Breast epithelium (tissue), 4 donors: ENCODE measurements at regions of chr9 and their contacts with region 1.

Region 1: GRCh38 chr9:98962181-98962560 is 18.5 kb downstream of the COL15A1 start:
- DNase-seq: no peak
- H3K4me3 ChIP-seq: no peak overlapping the region
- H3K27ac ChIP-seq: peak overlapping the region; percentile 12 to 33
- H3K4me1 ChIP-seq: no peaks in the 10 kb centered on the region
- H3K27me3 ChIP-seq: no peaks in the 10 kb centered on the region
- CTCF ChIP-seq: no peak
- POLR2A ChIP-seq: no peak

Region 2: DNA sequence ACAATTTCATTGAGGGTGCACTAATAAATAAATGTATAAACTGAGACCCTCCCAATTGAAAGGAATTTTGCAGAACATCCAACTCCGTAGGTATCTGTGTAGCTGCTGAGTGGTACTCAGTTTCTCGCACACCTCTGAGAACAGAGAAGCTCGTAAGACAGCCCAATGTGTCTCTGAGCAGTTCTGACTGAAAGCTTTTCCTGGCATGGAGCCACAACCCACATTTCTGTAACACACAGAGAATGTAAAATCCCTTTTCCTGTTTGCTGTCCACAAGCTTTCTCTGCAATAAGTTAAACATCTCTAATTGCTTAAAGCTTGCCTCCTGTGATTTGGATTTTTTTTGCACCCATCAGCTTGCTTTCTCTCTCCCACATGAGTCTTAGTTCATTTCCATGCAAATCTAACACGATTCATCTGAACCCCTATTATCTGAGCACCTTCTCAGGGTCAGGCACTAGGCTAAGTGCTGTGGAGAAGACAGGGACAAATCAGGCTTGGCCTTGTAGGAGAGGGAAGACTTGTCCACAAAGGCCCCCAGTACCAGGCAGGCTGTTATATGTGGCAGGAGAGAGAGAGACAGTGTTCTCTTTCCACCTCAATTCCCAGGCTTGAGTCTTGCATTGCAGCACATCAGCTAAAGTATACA is 62.6 kb before region 1 on chr9:
- intact Hi-C with region 1: loop called (anchors 10 kb)
- DNase-seq: no peak
- H3K4me3 ChIP-seq: no peak overlapping the region
- H3K27ac ChIP-seq: no peak overlapping the region
- H3K4me1 ChIP-seq: no peaks in the 10 kb centered on the region
- H3K27me3 ChIP-seq: no peaks in the 10 kb centered on the region
- CTCF ChIP-seq: no peak
- POLR2A ChIP-seq: no peak

Region 3: DNA sequence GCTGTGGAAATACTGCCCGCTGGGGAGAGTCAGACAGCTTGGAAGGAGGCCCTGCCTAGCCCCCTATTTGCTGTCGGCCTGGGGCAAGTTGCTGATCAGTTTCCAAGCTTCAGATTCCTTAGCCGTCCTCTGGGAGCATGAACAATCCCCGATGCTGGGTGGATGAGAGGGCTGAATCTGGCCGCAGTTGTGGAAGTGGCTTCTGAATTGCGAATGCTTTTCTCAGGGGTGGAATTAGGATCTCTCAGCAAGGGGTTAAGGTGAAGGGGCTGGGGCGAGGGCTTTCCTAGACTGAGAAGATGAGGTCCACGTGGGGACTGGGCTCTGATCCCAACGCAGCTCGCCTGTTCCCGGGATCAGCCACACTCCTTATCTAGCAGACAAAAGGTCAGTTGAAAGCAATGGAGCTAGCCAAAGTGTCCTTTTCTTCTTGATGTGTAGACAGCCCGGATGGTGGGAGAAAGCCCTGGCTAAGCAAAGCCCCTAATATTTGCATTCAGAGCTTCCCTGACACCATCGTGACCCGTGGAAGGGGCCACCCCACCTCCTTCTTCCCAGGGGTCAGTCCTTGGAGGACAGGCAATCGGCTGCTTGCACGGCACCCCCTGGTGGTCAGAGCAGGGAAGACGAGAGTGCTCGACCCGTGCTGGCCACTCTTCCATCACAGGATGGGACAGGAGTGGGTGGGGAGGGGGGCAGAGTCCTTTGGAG is 36.4 kb after region 1 on chr9:
- intact Hi-C with region 1: no loop called
- DNase-seq: peak; percentile 43 to 76
- H3K4me3 ChIP-seq: no peak overlapping the region
- H3K27ac ChIP-seq: peak overlapping the region; percentile 54 to 72
- H3K4me1 ChIP-seq: no peaks in the 10 kb centered on the region
- H3K27me3 ChIP-seq: no peaks in the 10 kb centered on the region
- CTCF ChIP-seq: peak; percentile 73 to 85 (median 73)
- POLR2A ChIP-seq: no peak

Region 4: GRCh38 chr9:99666571-99666970 is 704.4 kb after region 1 on chr9:
- intact Hi-C with region 1: no loop called
- DNase-seq: no peak
- H3K4me3 ChIP-seq: no peak overlapping the region
- H3K27ac ChIP-seq: no peak overlapping the region
- H3K4me1 ChIP-seq: no peaks in the 10 kb centered on the region
- H3K27me3 ChIP-seq: no peaks in the 10 kb centered on the region
- CTCF ChIP-seq: no peak
- POLR2A ChIP-seq: no peak